PC-9 (cell line): ENCODE measurements at regions of chr2 and their contacts with region 1.

Region 1: DNA sequence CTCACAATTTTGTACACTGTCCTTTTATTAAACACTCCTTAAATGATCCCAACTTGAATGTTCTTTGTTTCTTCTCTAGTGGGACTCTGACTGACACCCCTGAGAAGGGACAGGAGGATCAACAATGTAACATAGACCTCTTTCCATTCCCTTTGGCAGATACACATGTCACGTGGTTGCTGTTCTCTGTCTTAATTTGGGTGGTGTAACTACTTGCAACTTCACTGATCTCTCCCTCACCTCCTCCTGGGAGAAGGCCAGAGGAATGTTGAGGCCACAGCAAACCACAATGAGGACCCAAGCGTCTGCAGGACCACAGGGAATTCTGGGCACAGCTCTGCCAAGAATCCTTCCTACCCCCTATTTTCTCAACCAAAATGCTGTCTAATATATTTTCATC is 205.6 kb downstream of the RTP5 start:
- DNase-seq: peak; percentile 52 to 74
- H3K4me3 ChIP-seq: no peak overlapping the region
- H3K27ac ChIP-seq: peak overlapping the region; percentile 41
- H3K4me1 ChIP-seq: peaks cover 31% of the 10 kb centered on the region
- H3K27me3 ChIP-seq: peaks cover 6% of the 10 kb centered on the region; the same call in 1 of the 2 replicates
- CTCF ChIP-seq: no peak

Region 2: GRCh38 chr2:241673797-241674725 is 401.1 kb before region 1 on chr2:
- CTCF ChIA-PET with region 1: no interaction called
- POLR2A ChIA-PET with region 1: no interaction called
- intact Hi-C with region 1: no loop called
- DNase-seq: no peak
- H3K4me3 ChIP-seq: no peak overlapping the region
- H3K27ac ChIP-seq: no peak overlapping the region
- H3K4me1 ChIP-seq: no peaks in the 10 kb centered on the region
- H3K27me3 ChIP-seq: no peaks in the 10 kb centered on the region
- CTCF ChIP-seq: no peak

Region 3: DNA sequence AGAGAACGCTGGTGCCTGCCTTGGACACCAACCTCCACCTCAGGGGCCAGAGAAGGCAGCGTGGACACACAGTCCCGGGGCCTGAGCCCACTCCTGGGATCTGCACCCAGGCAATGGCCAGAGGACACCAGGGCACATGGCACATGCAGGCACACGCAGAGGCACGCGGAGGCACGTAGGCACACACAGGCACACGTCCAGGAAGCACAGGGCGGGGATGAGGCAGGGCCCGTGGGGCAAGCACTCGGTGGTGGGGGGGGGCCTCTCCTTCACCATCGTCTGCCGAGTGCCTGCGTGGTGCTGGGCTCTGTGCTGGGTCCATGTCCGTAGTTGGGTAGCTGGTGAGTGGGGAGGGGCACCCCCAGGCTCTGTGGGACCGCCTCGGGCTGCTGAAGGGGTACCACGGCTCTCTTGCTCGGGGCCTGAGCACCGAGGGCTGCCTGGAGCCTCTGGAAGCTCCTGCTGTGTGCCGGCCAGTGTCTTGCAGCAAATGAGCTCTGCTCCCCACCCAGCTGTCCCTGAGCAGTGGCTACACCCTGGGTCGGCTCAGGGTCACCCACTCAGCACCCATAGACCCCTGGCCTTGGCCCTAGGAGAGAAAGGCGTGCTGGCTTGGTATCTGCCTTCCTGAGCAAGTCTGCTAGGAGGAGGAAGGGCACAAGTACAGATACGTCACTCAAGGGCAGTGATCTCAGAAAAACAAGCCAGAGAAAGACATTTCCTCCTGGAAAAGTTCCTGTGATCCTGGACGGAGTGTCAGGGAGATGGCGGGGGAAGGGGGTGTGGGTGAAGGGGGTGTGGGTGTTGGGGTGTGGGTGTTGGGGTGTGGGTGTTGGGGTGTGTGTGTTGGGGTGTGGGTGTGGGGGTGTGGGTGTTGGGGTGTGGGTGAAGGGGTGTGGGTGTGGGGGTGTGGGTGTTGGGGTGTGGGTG is 179.2 kb before region 1 on chr2:
- CTCF ChIA-PET with region 1: no interaction called
- POLR2A ChIA-PET with region 1: no interaction called
- intact Hi-C with region 1: no loop called
- DNase-seq: no peak
- H3K4me3 ChIP-seq: no peak overlapping the region
- H3K27ac ChIP-seq: no peak overlapping the region
- H3K4me1 ChIP-seq: peaks cover 15% of the 10 kb centered on the region; the same call in 1 of the 2 replicates
- H3K27me3 ChIP-seq: peaks cover 60% of the 10 kb centered on the region
- CTCF ChIP-seq: no peak

Region 4: GRCh38 chr2:241965931-241966412 is 109.2 kb before region 1 on chr2:
- CTCF ChIA-PET with region 1: no interaction called
- POLR2A ChIA-PET with region 1: no interaction called
- intact Hi-C with region 1: loop called (anchors 5 kb)
- DNase-seq: peak; percentile 82 to 88
- H3K4me3 ChIP-seq: no peak overlapping the region; the same call in 1 of the 2 replicates
- H3K27ac ChIP-seq: no peak overlapping the region
- H3K4me1 ChIP-seq: peaks cover 12% of the 10 kb centered on the region; the same call in 1 of the 2 replicates
- H3K27me3 ChIP-seq: peaks cover 52% of the 10 kb centered on the region
- CTCF ChIP-seq: no peak

Region 5: DNA sequence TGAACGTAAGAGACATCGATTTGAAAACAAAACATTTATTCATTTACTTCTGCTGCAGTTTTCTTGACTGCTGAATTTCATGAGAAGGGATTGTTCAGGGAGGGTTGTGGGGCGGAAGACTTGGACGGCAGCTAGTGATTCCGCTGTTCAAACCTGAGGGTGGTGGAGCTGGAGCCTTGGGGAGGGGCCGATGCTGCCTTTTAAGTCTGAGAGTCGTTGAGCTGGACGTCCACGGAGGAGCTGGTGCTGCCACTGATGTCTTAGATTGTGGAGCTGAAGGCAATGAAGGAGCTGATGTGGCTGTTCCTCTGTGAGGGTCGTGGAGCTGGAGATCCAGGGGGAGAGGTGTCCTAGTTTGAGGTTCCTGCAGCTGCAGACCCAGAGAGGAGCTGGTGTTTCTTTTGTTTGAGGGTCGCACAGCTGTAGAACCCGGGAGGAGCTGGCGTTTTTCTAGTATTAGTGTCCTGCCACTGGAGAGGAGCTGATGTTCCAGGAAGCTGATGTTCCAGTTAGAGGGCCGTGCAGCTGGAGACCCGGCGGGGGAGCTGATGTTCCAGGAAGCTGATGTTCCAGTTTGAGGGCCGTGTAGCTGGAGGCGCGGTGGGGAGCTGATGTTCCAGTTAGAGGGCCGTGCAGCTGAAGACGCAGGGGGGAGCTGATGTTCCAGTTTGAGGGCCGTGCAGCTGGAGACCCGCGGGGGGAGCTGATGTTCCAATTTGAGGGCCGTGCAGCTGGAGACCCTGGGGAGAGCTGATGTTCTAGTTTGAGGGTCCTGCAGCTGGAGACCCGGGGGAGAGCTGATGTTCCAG is 54.8 kb before region 1 on chr2:
- CTCF ChIA-PET with region 1: no interaction called
- POLR2A ChIA-PET with region 1: no interaction called
- intact Hi-C with region 1: loop called (anchors 5 kb)
- DNase-seq: peak in 1 of 2 experiments; percentile 43
- H3K4me3 ChIP-seq: no peak overlapping the region
- H3K27ac ChIP-seq: no peak overlapping the region
- H3K4me1 ChIP-seq: no peaks in the 10 kb centered on the region
- H3K27me3 ChIP-seq: peaks cover 96% of the 10 kb centered on the region
- CTCF ChIP-seq: peak; percentile 26; the same call in 1 of the 2 replicates

Region 6: DNA sequence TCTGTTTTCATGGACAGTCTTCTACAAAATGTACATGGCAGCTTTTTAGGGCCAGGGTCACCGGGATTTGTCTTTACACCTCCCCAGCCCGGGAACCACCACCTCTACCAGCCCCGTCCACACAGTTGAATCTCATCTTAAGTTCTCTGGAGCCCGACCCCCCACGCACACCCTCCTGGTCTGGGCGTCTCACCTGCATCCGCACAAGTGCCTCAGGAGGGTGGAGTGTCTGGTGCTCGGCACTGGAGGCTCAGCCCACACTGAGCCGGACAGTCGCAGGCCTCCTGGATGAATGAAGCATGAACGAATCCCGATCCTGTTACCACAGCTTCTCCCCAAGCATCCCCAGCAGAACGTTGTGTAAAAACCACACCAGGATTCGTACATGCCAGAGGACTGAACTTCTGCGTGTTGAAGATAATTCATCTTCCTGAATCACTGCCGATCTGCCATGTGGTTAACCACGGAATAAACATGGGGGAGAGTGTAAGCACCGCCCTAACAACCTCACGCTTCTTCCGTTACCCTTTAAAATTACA is 43.6 kb before region 1 on chr2:
- CTCF ChIA-PET with region 1: no interaction called
- POLR2A ChIA-PET with region 1: no interaction called
- intact Hi-C with region 1: no loop called
- DNase-seq: peak in 1 of 2 experiments; percentile 21
- H3K4me3 ChIP-seq: no peak overlapping the region
- H3K27ac ChIP-seq: no peak overlapping the region
- H3K4me1 ChIP-seq: no peaks in the 10 kb centered on the region
- H3K27me3 ChIP-seq: peaks cover 100% of the 10 kb centered on the region
- CTCF ChIP-seq: no peak